Activated B cell treated with CpG ODN at 0.5 μM for 24 hours (primary cell): ENCODE measurements at regions of chr2 and their contacts with region 1.

Region 1: DNA sequence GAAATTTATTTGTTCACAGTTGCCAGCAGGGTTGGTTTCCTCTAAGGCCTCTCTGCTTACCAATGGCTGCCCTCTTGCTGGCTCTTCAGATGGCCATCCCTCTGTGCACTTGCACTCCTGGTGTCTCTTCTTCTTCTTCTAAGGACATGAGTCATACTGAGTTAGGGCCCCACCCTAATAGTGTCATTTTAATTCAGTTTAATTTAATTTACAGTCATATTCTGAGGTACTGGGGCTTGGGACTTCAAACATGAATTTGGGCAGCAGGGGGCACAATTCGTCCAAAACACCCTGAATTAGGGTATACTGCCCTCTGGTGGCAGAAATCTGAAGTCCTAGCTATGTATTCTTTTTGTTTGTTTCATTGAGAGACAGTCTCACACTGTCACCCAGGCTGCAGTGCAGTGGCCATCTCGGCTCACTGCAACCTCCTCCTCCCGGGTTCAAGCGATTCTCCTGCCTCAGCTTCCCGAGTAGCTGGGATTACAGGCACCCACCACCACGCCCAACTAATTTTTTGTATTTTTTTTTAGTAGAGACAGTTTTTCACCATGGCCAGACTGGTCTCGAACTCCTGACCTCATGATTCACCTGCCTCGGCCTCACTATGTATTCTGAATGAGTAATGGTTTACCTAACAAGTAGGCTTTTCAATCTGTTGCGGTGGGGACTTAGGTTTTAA is 19.8 kb downstream of the SLC4A1AP start:
- DNase-seq: peak; percentile 43
- ATAC-seq: peak; percentile 93
- H3K4me3 Mint-ChIP-seq: no peak overlapping the region
- H3K27ac Mint-ChIP-seq: peak overlapping the region; percentile 0
- H3K4me1 Mint-ChIP-seq: peaks cover 8% of the 10 kb centered on the region
- H3K27me3 Mint-ChIP-seq: no peaks in the 10 kb centered on the region
- CTCF ChIP-seq: peak; percentile 94

Region 2: DNA sequence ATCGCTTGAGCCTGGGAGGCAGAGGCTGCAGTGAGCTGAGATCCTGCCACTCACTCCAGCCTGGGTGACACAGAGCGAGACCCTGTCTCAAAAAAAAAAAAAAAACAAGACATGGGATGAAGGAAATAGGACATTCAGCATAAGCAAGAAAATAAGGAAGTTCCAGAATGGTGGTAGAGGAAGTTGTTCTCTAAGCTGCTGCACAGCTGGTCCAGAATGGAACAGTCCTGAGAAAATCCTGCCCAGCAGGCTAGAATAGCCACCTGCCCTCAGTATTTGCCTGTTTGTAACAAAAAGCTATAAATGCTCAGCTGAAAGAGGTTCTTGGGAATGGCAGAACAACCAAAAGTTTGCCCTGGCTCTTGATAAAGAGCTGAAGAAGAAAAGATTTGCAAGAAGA is 724.2 kb before region 1 on chr2:
- CTCF ChIA-PET with region 1: no interaction called
- POLR2A ChIA-PET with region 1: no interaction called
- intact Hi-C with region 1: loop called (anchors 1 kb)
- DNase-seq: no peak
- ATAC-seq: no peak
- H3K4me3 Mint-ChIP-seq: no peak overlapping the region
- H3K27ac Mint-ChIP-seq: no peak overlapping the region
- H3K4me1 Mint-ChIP-seq: no peaks in the 10 kb centered on the region
- H3K27me3 Mint-ChIP-seq: peaks cover 21% of the 10 kb centered on the region
- CTCF ChIP-seq: no peak

Region 3: DNA sequence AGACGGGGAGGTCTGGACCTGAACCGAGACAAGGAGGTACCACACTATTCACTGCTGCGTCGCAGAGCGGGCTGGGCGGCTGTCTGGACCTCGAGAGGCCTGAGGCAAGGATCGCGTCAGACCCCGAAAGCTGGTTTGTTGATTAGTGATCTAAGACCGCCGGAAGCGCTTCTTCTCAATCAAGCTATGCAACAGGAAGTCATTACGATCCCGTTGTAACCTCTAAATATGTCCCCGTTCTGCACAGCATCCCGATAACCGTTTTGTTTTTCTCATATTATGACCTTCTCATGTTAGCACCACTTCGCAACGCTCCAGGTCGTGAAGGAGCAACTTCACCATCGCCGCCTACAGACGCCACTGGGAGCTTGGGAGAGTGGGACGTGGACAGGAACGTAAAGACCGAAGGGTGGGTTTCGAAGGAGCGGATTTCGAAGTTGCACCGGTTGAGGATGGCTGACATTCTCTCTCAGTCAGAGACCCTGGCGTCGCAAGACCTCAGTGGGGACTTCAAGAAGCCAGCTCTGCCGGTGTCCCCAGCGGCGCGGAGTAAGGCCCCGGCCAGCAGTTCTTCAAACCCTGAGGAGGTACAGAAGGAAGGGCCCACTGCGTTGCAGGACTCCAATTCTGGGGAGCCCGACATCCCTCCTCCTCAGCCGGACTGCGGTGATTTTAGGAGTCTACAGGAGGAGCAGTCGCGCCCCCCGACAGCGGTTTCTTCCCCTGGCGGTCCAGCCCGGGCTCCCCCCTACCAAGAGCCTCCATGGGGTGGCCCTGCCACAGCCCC is 19.9 kb before region 1 on chr2 and contains the starts of genes SLC4A1AP and SUPT7L:
- CTCF ChIA-PET with region 1: interaction called, 12 read pairs
- POLR2A ChIA-PET with region 1: interaction called, 8 read pairs
- intact Hi-C with region 1: loop called (anchors 1 kb)
- DNase-seq: peak; percentile 72
- ATAC-seq: peak; percentile 81
- H3K4me3 Mint-ChIP-seq: peak within 1 kb of the TSS; percentile 100
- H3K27ac Mint-ChIP-seq: peak within 1 kb of the TSS; percentile 99
- H3K4me1 Mint-ChIP-seq: peaks cover 46% of the 10 kb centered on the region
- H3K27me3 Mint-ChIP-seq: no peaks in the 10 kb centered on the region
- CTCF ChIP-seq: no peak
- total RNA-seq, gene SLC4A1AP: 21.4 and 22.0 TPM in 2 replicates
- total RNA-seq, gene SUPT7L: 28.1 and 30.9 TPM in 2 replicates

Region 4: GRCh38 chr2:27672723-27673486 is 10.6 kb before region 1 on chr2:
- CTCF ChIA-PET with region 1: interaction called, 12 read pairs
- POLR2A ChIA-PET with region 1: no interaction called
- intact Hi-C with region 1: no loop called
- DNase-seq: no peak
- ATAC-seq: no peak
- H3K4me3 Mint-ChIP-seq: no peak overlapping the region
- H3K27ac Mint-ChIP-seq: no peak overlapping the region
- H3K4me1 Mint-ChIP-seq: no peaks in the 10 kb centered on the region
- H3K27me3 Mint-ChIP-seq: no peaks in the 10 kb centered on the region
- CTCF ChIP-seq: no peak

Region 5: GRCh38 chr2:27703638-27704341 is 20.3 kb after region 1 on chr2:
- CTCF ChIA-PET with region 1: interaction called, 11 read pairs
- POLR2A ChIA-PET with region 1: interaction called, 3 read pairs
- intact Hi-C with region 1: no loop called
- DNase-seq: peak; percentile 55
- ATAC-seq: peak; percentile 79
- H3K4me3 Mint-ChIP-seq: no peak overlapping the region
- H3K27ac Mint-ChIP-seq: no peak overlapping the region
- H3K4me1 Mint-ChIP-seq: peaks cover 3% of the 10 kb centered on the region
- H3K27me3 Mint-ChIP-seq: peaks cover 9% of the 10 kb centered on the region
- CTCF ChIP-seq: peak; percentile 75